A673 (cell line): ENCODE measurements at regions of chr19 and their contacts with region 1.

Region 1: GRCh38 chr19:44954824-44955586 is at the start of gene CLPTM1:
- DNase-seq: peak; percentile 98
- H3K4me3 ChIP-seq: peak within 1 kb of the TSS; percentile 99
- H3K27ac ChIP-seq: peak within 1 kb of the TSS; percentile 90
- H3K4me1 ChIP-seq: peaks cover 15% of the 10 kb centered on the region
- H3K27me3 ChIP-seq: no peaks in the 10 kb centered on the region
- CTCF ChIP-seq: no peak
- total RNA-seq, gene CLPTM1: 135 and 138 TPM in 2 replicates

Region 2: DNA sequence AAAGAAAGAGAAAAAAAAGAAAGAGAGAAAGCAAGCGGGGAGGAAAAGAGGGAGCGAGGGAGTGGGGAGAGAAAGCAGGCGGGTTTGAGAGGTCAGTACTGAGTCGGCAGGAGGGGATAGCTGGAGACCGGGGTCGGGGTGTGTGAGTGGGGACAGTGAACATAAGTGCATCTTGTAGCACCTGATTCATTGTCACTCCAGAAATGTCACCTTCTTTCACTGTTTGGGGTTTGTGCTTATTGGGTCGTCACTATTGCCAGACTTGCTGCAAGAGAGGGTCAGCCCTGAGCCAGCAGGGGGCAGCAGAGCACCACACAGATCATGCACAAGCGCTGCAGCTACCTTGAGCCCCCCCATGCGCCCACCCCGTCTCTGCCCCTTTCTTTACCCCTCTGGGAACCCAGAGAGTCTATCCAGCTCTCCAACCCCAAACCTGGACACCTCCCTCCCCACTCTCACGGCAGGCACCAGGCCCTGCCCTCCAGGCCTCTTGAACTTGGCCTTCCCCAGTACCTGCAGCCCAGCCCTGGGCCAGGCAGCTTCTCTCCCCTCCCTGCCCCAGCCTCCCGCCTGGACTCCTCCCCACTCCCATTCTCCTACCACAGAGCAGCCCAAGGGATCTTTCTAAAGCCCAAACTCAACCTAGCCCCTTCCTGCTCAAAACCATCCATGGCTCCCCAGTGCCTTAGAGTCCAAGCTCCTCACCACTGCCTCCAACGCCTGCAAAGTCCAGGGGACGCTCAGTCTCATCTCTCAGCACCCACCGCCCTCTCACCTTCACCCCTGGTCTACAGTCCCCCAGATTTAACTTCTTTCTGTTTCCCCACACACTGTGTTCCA is 265.7 kb before region 1 on chr19:
- CTCF ChIA-PET with region 1: interaction called, 6 read pairs
- POLR2A ChIA-PET with region 1: no interaction called
- intact Hi-C with region 1: loop called (anchors 10 kb)
- DNase-seq: peak; percentile 76
- H3K4me3 ChIP-seq: peak overlapping the region; percentile 11
- H3K27ac ChIP-seq: no peak overlapping the region
- H3K4me1 ChIP-seq: no peaks in the 10 kb centered on the region
- H3K27me3 ChIP-seq: no peaks in the 10 kb centered on the region
- CTCF ChIP-seq: peak; percentile 92

Region 3: DNA sequence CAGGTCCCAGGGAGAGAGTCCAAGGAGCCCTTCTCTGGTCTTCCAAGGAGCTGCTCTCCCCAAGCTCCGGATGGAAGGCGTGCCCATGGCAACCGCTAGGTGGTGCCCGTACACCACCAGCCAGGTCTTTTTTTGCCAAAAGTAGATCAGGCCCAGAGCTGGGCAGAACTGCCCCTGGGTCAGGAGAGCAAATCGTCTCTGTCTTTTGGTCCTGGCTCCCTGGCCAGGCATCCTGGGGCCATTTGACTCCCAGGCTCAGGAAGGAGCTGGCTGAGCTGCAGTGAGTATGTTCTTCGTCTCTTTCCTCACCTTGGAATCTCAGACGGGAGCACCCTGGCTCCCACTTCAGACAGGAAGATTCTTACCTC is 231.1 kb before region 1 on chr19:
- CTCF ChIA-PET with region 1: interaction called, 3 read pairs
- POLR2A ChIA-PET with region 1: no interaction called
- intact Hi-C with region 1: loop called (anchors 5 kb)
- DNase-seq: peak; percentile 81
- H3K4me3 ChIP-seq: no peak overlapping the region
- H3K27ac ChIP-seq: no peak overlapping the region
- H3K4me1 ChIP-seq: no peaks in the 10 kb centered on the region
- H3K27me3 ChIP-seq: no peaks in the 10 kb centered on the region
- CTCF ChIP-seq: peak; percentile 95

Region 4: DNA sequence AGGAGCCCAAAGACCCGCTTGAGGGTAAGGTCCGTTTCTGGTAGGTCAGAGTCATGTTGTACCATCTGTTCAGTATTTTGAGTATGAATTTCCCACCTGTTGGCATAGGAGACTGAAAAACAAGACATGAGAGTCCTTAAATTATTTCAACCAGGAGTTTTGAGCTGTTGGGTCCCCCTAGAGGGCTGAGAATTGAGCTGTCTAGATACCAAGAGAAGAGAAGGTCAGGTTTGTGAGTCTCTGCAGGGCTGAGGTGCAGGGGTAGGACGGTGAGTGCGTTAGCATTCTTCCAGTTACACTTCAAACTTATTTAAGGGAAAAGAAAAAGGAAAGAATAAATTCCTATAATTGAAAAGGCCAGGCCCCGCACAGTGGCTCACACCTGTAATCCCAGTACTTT is 172.3 kb before region 1 on chr19:
- CTCF ChIA-PET with region 1: no interaction called
- POLR2A ChIA-PET with region 1: no interaction called
- intact Hi-C with region 1: loop called (anchors 5 kb)
- DNase-seq: no peak
- H3K4me3 ChIP-seq: no peak overlapping the region
- H3K27ac ChIP-seq: no peak overlapping the region
- H3K4me1 ChIP-seq: no peaks in the 10 kb centered on the region
- H3K27me3 ChIP-seq: no peaks in the 10 kb centered on the region
- CTCF ChIP-seq: no peak; the same call in 1 of the 2 replicates

Region 5: GRCh38 chr19:44845612-44846454 is 109.2 kb before region 1 on chr19 and contains the start of gene NECTIN2:
- CTCF ChIA-PET with region 1: interaction called, 10 read pairs
- POLR2A ChIA-PET with region 1: no interaction called
- intact Hi-C with region 1: no loop called
- DNase-seq: peak; percentile 99
- H3K4me3 ChIP-seq: peak within 1 kb of the TSS; percentile 64
- H3K27ac ChIP-seq: peak within 1 kb of the TSS; percentile 96
- H3K4me1 ChIP-seq: peaks cover 29% of the 10 kb centered on the region
- H3K27me3 ChIP-seq: no peaks in the 10 kb centered on the region
- CTCF ChIP-seq: peak; percentile 91
- total RNA-seq, gene NECTIN2: 76.7 and 83.6 TPM in 2 replicates

Region 6: DNA sequence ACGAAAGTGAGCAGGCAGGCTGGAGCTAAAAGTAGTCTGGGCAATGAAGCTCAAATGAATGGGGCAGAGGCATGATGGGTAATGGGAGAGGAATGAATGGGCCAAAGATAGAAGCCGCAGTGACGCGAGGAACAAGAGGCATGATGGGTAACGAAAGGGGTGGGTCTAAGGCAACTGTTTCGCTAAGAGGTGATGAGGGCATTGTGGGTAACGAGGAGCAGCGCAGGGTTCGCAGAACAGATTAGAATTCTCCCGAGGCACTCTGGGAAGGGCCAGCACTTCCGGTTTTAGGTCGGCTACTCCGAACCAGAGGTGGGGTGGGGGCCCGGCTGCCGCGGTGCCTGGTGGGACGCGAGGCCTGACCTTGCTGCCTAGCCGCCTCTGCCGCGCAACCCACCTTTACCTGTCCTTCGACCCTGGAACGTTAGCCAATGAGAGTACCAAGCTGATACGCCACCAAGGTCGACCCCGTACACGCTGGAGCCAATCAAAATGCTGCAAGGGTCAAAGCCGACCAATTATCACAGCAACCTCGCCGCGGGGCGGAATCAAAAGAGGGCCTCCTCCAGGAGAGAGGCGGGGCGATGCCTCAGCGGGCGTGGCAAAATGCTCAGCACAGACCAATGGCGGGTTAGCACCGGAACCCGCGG is 64.5 kb before region 1 on chr19:
- CTCF ChIA-PET with region 1: no interaction called
- POLR2A ChIA-PET with region 1: interaction called, 16 read pairs
- intact Hi-C with region 1: no loop called
- DNase-seq: peak; percentile 100
- H3K4me3 ChIP-seq: peak overlapping the region; percentile 85
- H3K27ac ChIP-seq: peak overlapping the region; percentile 89
- H3K4me1 ChIP-seq: peaks cover 14% of the 10 kb centered on the region
- H3K27me3 ChIP-seq: no peaks in the 10 kb centered on the region
- CTCF ChIP-seq: no peak

Region 7: GRCh38 chr19:44903602-44904425 is 51.2 kb before region 1 on chr19:
- CTCF ChIA-PET with region 1: no interaction called
- POLR2A ChIA-PET with region 1: no interaction called
- intact Hi-C with region 1: loop called (anchors 2 kb)
- DNase-seq: peak; percentile 65
- H3K4me3 ChIP-seq: no peak overlapping the region
- H3K27ac ChIP-seq: no peak overlapping the region
- H3K4me1 ChIP-seq: peaks cover 6% of the 10 kb centered on the region
- H3K27me3 ChIP-seq: no peaks in the 10 kb centered on the region
- CTCF ChIP-seq: peak; percentile 97